ENCODE measurements at regions of chr2 and their contacts with region 1.

Region 1: GRCh38 chr2:208049006-208049405 is 23.7 kb upstream of the PLEKHM3 start:
- DNase-seq: no peak
- ATAC-seq: no peak
- H3K4me3 ChIP-seq: no peak overlapping the region
- H3K27ac ChIP-seq: no peak overlapping the region
- H3K4me1 ChIP-seq: no peaks in the 10 kb centered on the region
- H3K27me3 ChIP-seq: no peaks in the 10 kb centered on the region
- CTCF ChIP-seq: no peak
- POLR2A ChIP-seq: no peak
- RAD21 ChIP-seq: no peak

Region 2: GRCh38 chr2:208072250-208072892 is 23.4 kb after region 1 on chr2:
- CTCF ChIA-PET with region 1: no interaction called
- POLR2A ChIA-PET with region 1: interaction called, 10 read pairs
- RAD21 ChIA-PET with region 1: no interaction called
- intact Hi-C with region 1: no loop called
- DNase-seq: peak; percentile 57
- ATAC-seq: peak; percentile 98
- H3K4me3 ChIP-seq: no peak overlapping the region
- H3K27ac ChIP-seq: no peak overlapping the region
- H3K4me1 ChIP-seq: no peaks in the 10 kb centered on the region
- H3K27me3 ChIP-seq: no peaks in the 10 kb centered on the region
- CTCF ChIP-seq: peak; percentile 38 to 86 (median 62); a peak in 5 of 6 replicates
- POLR2A ChIP-seq: no peak
- RAD21 ChIP-seq: peak; percentile 87